ENCODE measurements at regions of chr1 and their contacts with region 1.

Region 1: DNA sequence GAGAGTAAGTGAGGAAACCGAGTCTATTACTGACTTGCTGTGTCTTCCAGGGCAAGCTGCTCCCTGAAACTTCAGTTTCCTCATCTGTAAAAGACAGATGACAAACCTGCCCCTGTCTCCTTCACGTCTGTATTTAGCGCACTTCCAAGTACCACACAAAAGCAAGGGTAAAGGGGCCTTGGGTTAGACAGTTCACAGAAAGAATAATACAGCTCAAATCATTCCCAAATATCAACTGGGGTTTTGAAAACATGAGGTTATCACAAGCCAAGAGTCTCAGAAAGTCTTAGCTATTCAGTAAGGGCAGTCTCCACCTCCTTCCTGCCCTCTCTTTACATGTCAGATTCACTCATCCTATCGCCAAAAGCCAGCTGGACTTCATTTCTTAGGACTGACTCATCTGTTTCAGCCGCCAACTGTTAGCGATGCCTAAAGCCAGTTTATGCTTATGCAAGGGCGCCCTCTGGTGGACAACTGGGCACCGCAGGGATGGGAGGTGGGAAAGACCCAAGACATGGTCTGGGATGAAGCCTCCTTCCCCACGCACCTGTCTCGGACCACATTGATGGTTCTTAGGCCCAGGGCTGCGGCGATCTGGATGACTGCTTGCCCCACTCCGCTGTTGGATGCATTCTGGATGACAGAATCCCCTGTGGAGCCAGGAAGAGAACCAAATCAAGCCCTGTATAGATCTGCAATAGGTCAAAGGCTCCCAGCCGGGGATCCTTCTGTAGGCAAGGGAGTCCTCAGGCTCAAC is 21.1 kb upstream of the SRSF4 start:
- DNase-seq: peak; percentile 92
- H3K4me3 Mint-ChIP-seq: no peak overlapping the region
- H3K27ac Mint-ChIP-seq: no peak overlapping the region
- H3K4me1 Mint-ChIP-seq: peaks cover 3% of the 10 kb centered on the region
- H3K27me3 Mint-ChIP-seq: no peaks in the 10 kb centered on the region

Region 2: DNA sequence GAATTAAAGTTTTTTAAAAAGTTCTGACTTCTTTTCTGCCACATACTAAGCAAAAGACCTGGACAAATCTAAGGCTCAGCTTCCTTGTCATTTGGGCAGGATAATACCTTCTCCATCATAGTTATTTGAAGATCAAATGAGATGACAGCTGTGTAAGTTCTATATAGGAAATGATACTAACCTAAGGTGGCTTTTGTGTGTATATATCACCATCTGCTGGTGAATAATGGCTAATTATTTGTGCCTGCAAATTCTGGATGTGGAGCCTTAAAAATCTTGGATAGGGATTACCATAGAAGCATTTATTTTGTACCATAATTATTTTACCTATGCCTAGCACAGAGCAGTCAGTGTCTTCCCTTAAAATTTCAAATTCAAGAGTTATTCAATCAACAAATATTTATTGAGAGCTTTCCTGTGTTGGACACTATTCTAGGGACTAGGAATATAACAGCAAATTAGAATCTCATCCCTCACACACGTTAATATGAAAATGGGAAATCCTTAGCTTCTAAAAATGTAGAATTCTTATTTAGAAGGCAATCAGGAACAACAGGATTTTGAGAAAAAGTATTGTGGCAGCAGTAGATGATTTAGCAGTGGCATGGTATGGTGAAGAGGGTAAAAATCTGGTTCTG is 168.8 kb before region 1 on chr1:
- CTCF ChIA-PET with region 1: interaction called, 48 read pairs
- DNase-seq: no peak
- H3K4me3 Mint-ChIP-seq: no peak overlapping the region
- H3K27ac Mint-ChIP-seq: no peak overlapping the region
- H3K4me1 Mint-ChIP-seq: peaks cover 3% of the 10 kb centered on the region
- H3K27me3 Mint-ChIP-seq: no peaks in the 10 kb centered on the region

Region 3: GRCh38 chr1:29181413-29182225 is 21.1 kb before region 1 on chr1 and contains the start of gene SRSF4:
- CTCF ChIA-PET with region 1: interaction called, 27 read pairs
- DNase-seq: peak; percentile 99
- H3K4me3 Mint-ChIP-seq: peak within 1 kb of the TSS; percentile 94
- H3K27ac Mint-ChIP-seq: peak within 1 kb of the TSS; percentile 95
- H3K4me1 Mint-ChIP-seq: peaks cover 51% of the 10 kb centered on the region
- H3K27me3 Mint-ChIP-seq: no peaks in the 10 kb centered on the region